MCF 10A (cell line): ENCODE measurements at regions of chr5 and their contacts with region 1.

Region 1: DNA sequence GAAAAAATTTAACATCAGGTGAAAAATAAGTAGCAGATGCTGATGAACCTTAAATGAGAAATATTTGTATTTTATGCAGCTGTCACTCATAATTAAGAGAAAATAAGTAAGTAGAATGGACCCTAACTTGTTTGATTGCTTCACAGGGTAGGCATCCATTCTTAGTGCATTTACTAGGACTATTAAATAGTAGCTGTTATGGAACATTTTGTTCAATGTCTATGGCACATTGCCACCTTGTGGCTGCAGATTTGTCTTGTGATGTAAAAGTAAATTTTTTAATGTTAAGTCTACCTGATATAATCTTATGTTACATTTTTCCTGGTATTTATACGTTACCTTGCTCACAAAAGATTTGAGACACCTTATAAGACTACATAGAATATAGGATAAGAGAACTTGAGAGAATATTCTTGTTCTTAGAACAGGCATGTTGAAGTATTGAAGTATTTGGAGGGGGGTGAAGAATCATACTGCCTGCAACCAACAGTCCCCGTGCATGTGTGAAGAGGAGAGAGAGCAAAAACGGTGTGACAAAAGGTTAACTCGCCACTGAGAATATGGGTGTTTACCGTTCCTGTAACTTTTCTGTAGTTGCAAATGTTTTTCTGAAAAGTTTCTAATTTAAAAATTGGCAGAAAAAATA is 161.1 kb downstream of the MAST4 start:
- DNase-seq: peak; percentile 68
- H3K4me3 Mint-ChIP-seq: no peak overlapping the region
- H3K27ac Mint-ChIP-seq: no peak overlapping the region
- H3K4me1 Mint-ChIP-seq: no peaks in the 10 kb centered on the region
- H3K27me3 Mint-ChIP-seq: peaks cover 69% of the 10 kb centered on the region
- CTCF ChIP-seq: peak; percentile 49

Region 2: DNA sequence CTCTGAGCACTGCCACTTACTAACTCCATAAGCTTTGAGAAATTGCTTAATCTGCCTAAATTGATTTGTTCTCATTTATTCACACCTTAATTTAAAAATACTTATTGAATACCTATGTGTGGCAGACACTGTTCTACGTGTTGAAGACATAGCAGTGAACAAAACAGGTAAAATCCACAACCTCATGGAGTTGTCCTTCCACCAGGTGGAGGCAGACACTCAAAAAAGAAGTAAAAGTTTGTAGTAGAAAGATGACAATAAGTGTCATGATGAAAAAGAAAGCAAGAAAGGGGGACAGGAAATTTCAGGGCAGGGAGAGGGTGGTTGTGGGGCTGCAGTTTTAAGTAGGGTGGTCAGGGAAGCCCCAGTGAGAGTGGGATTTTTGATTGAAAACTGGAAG is 518.3 kb before region 1 on chr5:
- CTCF ChIA-PET with region 1: interaction called, 3 read pairs
- POLR2A ChIA-PET with region 1: no interaction called
- intact Hi-C with region 1: loop called (anchors 1 kb)
- DNase-seq: peak; percentile 35
- H3K4me3 Mint-ChIP-seq: no peak overlapping the region
- H3K27ac Mint-ChIP-seq: no peak overlapping the region
- H3K4me1 Mint-ChIP-seq: peaks cover 6% of the 10 kb centered on the region
- H3K27me3 Mint-ChIP-seq: peaks cover 27% of the 10 kb centered on the region
- CTCF ChIP-seq: peak; percentile 36